Naive thymus-derived CD8-positive, alpha-beta T cell (primary cell): ENCODE measurements at regions of chr11 and their contacts with region 1.

Region 1: DNA sequence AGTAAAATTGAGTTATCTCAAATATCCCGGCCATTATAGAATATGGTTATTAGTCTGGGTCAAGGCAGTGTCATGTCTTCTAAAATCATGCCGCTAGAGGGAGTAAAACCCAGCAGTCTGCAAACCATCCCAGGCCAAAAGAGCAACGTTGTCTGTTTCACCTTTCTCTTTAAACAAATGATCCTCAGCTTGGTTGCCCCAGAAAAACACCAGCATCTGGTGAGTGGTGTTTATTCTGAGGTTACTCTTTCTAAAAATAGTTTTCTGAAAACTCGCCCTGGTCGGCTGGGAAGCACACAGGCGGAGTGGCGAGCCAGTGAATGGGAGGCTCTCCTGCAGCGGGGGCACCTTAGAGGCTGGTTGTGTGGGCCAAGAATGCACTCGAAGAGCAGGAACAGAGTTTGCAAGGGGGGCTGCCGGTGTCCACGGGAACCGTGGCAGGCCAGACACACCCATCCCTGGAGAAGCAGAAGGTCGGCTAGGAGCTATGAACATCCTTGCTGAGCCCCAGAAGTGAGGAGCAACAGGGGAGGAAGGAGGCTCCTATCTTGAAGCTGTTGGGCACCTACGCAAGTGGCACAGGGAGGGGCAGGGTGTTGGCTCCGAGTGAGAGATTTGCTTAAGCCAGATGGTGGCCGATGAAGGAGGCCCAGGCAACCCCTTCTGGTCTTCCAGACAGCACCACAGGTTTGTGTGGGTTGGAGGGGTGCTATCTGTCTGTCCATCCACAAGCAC is 297.1 kb downstream of the ETS1 start:
- DNase-seq: peak; percentile 20 to 87 (median 76)
- ATAC-seq: peak; percentile 64 to 69
- H3K4me3 Mint-ChIP-seq: peak overlapping the region; percentile 86 to 95 (median 92)
- H3K27ac Mint-ChIP-seq: peak overlapping the region; percentile 98 to 100 (median 100)
- H3K4me1 Mint-ChIP-seq: peaks cover 41 to 97% (median 88%) of the 10 kb centered on the region in 4 donors
- H3K27me3 Mint-ChIP-seq: no peaks in the 10 kb centered on the region

Region 2: GRCh38 chr11:128302425-128303186 is 12.3 kb after region 1 on chr11:
- POLR2A ChIA-PET with region 1: interaction called, 135 read pairs
- DNase-seq: peak; percentile 24 to 94 (median 78)
- ATAC-seq: peak; percentile 78 to 88
- H3K4me3 Mint-ChIP-seq: peak overlapping the region; percentile 85 to 95 (median 91)
- H3K27ac Mint-ChIP-seq: peak overlapping the region; percentile 97 to 100 (median 99)
- H3K4me1 Mint-ChIP-seq: peaks cover 48 to 95% (median 84%) of the 10 kb centered on the region in 4 donors
- H3K27me3 Mint-ChIP-seq: no peaks in the 10 kb centered on the region

Region 3: DNA sequence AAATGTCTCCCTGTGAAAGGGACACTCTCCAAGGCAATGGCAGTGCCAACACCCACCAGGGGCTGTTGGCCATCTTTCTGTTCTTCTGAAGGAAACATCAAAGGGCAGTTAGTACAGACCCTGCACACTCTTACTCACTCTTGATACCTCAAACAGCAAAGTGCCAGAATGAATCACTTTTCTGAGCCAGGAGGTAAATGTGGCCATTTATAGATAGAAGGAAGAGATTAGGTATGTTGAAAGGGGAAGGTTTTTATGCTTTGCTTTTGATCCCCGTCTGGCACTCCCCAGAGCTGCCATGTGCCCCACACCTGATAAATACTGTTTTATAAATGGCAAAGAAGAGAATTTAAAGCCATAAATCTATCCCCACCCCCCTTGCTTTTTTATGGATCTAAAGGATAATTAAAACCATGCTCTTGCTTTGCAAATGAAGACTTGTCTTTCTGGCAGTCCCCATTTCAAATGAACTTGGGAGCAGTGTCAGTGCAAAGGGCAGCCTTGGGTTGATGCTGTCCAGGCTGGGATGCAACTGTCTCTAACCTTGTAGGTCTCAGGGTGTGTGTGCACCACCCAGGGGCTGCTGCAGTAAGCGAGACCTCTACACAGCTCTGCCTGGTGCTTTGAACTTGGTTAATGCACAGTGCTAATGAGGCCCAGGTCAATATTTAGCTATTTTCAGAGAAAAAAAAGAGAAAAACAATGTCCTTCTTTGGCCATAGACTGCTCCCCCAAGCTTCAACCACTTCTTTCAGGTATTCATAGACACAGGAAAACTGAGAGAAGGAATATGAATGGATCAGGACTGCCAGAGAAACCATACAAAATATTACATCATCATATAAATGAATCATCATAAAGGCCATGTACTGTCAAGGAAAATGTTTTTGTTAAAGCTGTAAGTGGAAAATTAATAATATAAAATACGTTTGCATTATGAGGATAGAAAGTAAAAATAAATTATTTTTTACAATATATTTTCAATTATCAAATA is 89.6 kb after region 1 on chr11:
- POLR2A ChIA-PET with region 1: no interaction called
- DNase-seq: peak in 4 of 10 donors; percentile 9 to 16 (median 11)
- ATAC-seq: peak; percentile 89 to 93
- H3K4me3 Mint-ChIP-seq: peak overlapping the region in 5 of 10 donors; percentile 1 to 50 (median 38)
- H3K27ac Mint-ChIP-seq: peak overlapping the region; percentile 20 to 83 (median 72)
- H3K4me1 Mint-ChIP-seq: peaks cover 18 to 40% (median 32%) of the 10 kb centered on the region in 4 donors
- H3K27me3 Mint-ChIP-seq: no peaks in the 10 kb centered on the region

Region 4: DNA sequence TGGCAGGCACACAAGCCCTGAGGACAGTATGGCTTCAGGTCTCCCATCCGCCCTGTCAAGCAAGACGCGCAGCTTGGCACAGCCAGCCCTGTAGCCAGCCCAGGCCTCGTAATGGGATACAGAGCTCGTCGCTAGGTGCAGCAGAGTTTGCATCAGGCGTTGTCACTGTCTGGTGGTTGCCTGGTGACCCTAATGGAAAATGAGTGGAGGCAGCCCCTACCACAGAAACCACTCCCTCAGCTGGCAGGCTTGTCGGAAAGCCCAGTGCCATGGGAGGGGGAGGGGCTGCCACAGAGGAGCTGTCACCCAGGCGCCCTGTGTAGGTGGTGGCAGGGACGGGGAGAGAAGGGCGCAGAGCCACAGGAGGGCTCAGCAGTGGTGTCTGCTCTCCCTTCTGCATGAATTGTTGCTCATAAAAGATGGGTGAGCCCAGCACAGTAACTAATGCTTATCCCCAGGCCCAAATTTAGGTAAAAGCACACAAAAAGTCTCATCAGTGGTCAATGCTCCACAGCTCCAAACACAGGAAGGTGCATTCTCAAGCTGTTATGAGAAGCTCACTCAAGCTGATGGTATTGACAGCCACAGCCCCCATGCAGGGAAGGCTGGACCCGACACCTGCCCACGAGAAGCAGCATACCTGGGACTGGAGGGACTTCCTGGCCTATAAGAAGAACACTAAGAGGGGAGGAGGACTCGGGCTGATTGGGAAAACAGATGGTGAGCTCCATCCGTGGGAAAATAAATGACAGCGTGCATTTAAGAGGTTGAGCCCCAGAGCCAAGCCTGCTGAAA is 132.5 kb after region 1 on chr11:
- POLR2A ChIA-PET with region 1: interaction called, 11 read pairs
- DNase-seq: peak; percentile 66 to 97 (median 87)
- ATAC-seq: peak; percentile 90
- H3K4me3 Mint-ChIP-seq: peak overlapping the region; percentile 55 to 77 (median 71)
- H3K27ac Mint-ChIP-seq: peak overlapping the region; percentile 86 to 99 (median 94)
- H3K4me1 Mint-ChIP-seq: peaks cover 26 to 73% (median 62%) of the 10 kb centered on the region in 4 donors
- H3K27me3 Mint-ChIP-seq: no peaks in the 10 kb centered on the region

Region 5: DNA sequence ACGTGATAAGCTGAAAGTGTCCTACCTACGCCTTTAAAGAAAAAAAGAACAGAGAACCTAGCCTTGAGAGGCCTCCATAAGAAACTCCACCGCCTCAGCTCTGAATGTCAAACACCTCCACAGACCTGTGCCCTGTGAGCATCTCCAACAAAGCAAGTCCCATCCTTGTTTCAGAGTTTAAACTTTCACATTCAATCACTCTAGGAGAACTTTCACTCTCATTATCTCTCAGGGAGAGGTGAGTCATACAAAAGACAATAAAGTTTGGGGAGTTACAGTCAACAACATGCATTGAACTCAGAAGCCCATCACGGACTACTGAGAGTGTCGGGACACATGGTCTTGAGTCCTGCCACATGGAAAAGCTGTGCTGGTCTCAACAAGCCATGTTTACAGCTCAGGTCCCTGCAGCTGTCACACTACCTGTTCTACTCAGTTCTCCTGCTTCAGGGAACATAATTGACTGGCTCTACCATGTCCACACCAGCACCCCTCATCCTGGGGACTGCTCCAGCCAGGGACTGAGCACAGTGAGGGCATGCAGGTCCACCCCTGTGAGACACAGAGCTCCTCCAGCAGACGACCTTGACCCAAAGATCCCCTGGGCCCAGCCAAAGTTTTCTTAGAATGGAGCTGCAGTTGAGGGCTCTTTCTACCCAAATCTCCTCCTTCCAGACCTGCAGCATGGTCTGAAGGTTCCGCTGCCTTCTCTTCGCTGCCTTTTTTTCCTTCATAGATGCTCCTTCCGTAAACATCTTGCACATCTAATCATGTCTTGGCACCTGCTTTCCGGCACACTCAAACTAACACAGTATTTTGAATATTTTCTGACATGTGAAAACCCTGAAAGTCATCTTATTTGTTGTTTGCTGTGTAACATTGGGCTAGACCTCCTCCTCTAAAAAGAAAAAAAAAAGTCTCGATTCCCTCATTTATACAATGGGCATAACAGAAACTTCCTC is 182.1 kb after region 1 on chr11:
- POLR2A ChIA-PET with region 1: interaction called, 252 read pairs
- DNase-seq: peak in 6 of 10 donors; percentile 26 to 56 (median 50)
- ATAC-seq: peak; percentile 2 to 33
- H3K4me3 Mint-ChIP-seq: peak overlapping the region; percentile 75 to 93 (median 88)
- H3K27ac Mint-ChIP-seq: peak overlapping the region; percentile 93 to 99 (median 98)
- H3K4me1 Mint-ChIP-seq: peaks cover 67 to 100% (median 96%) of the 10 kb centered on the region in 4 donors
- H3K27me3 Mint-ChIP-seq: no peaks in the 10 kb centered on the region

Region 6: DNA sequence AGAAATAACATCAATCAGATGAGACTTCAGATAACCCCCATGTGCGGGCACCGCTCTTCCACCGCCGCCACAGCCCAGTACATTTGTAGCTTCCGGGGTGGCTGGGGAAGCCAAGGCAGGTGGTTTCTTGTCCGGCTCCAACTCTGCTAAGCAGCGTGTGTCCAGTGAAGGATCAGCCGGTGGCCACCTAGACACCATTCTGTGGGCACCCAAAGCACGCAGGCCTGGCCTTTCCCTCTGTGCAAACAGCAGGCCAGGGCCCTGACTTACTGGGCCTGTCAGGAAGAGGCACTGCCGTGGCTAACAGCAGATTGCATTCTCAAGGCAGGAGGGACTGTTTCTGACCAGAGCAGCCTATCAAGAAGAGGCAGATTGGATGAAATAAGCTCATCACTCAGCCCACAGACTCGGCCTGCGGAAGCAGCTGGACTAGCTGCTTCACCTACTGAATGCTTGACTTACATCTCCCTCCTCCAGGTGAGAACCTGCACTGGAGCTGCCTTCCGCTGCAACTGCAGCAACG is 222.3 kb after region 1 on chr11:
- POLR2A ChIA-PET with region 1: interaction called, 77 read pairs
- DNase-seq: peak in 2 of 10 donors; percentile 52 to 67
- ATAC-seq: peak; percentile 14 to 27
- H3K4me3 Mint-ChIP-seq: peak overlapping the region; percentile 89 to 99 (median 98)
- H3K27ac Mint-ChIP-seq: peak overlapping the region; percentile 93 to 98 (median 96)
- H3K4me1 Mint-ChIP-seq: peaks cover 53 to 99% (median 89%) of the 10 kb centered on the region in 4 donors
- H3K27me3 Mint-ChIP-seq: no peaks in the 10 kb centered on the region

Region 7: DNA sequence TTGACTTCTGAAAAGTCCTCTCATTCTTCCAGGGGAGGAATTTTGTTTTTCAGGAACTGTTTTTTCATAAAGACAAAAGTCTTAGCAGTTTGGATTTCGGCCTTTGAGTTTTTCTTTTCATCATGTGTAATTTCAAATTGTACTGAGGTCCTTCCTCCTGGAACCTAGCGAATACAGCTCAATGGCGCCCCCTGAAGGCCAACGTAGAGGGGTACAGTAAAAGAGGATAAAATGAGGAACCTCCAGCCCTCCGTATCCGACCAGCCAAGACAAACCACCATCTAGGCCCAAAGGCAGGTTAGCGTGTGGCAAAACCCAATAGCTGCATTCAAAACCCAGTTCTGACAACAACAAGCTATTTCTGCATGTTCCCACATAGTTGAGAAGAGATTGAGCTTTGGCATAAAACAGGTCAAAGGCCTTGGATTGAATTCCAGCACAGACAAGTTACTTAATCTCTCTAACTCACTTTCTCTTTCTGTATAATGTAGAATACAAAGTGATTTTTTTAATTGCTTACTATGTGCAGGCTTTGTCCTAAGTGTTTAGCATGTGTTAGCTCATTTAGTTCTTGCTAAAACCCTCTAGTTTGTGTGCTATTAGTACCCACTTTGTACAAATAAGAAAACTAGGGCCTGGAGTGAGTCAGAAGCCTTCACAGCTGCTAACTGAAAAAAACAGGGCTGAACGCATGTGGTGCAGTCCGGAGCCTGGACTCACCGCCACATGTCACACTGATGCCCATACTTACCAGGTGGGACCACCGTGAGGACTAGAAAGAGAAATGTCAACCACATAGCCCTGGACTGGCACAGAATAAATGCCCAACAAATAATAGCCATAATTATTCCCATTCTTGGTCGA is 340.3 kb after region 1 on chr11:
- POLR2A ChIA-PET with region 1: interaction called, 40 read pairs
- DNase-seq: peak; percentile 76 to 95 (median 90)
- ATAC-seq: peak; percentile 70 to 81
- H3K4me3 Mint-ChIP-seq: peak overlapping the region; percentile 51 to 83 (median 76)
- H3K27ac Mint-ChIP-seq: peak overlapping the region; percentile 93 to 99 (median 95)
- H3K4me1 Mint-ChIP-seq: peaks cover 44 to 82% (median 68%) of the 10 kb centered on the region in 4 donors
- H3K27me3 Mint-ChIP-seq: peaks cover 0 to under 1% (median 0%) of the 10 kb centered on the region in 5 donors